Heart left ventricle (tissue), 16 donors: ENCODE measurements at regions of chr22 and their contacts with region 1.

Region 1: GRCh38 chr22:46619830-46620501 is at the start of gene GRAMD4:
- DNase-seq: peak; percentile 64 to 85 (median 76)
- ATAC-seq: peak; percentile 15 to 59 (median 35)
- H3K4me3 ChIP-seq: peak within 1 kb of the TSS in 1 of 12 donors; percentile 37
- H3K27ac ChIP-seq: peak within 1 kb of the TSS; percentile 47 to 92 (median 84)
- H3K4me1 ChIP-seq: peaks cover 15 to 74% (median 58%) of the 10 kb centered on the region in 12 donors
- H3K27me3 ChIP-seq: no peaks in the 10 kb centered on the region
- CTCF ChIP-seq: no peak
- POLR2A ChIP-seq: no peak
- total RNA-seq, gene GRAMD4: 31.2 to 122 (median 72.5) TPM

Region 2: GRCh38 chr22:46584081-46584921 is 35.7 kb before region 1 on chr22:
- intact Hi-C with region 1: loop called in 4 of 10 experiments (anchors 5 kb)
- DNase-seq: peak in 2 of 5 donors; percentile 38 to 60
- ATAC-seq: no peak
- H3K4me3 ChIP-seq: no peak overlapping the region
- H3K27ac ChIP-seq: peak overlapping the region in 5 of 12 donors; percentile 24 to 63 (median 41)
- H3K4me1 ChIP-seq: peaks cover 14 to 90% (median 67%) of the 10 kb centered on the region in 12 donors
- H3K27me3 ChIP-seq: no peaks in the 10 kb centered on the region
- CTCF ChIP-seq: no peak
- POLR2A ChIP-seq: no peak

Region 3: DNA sequence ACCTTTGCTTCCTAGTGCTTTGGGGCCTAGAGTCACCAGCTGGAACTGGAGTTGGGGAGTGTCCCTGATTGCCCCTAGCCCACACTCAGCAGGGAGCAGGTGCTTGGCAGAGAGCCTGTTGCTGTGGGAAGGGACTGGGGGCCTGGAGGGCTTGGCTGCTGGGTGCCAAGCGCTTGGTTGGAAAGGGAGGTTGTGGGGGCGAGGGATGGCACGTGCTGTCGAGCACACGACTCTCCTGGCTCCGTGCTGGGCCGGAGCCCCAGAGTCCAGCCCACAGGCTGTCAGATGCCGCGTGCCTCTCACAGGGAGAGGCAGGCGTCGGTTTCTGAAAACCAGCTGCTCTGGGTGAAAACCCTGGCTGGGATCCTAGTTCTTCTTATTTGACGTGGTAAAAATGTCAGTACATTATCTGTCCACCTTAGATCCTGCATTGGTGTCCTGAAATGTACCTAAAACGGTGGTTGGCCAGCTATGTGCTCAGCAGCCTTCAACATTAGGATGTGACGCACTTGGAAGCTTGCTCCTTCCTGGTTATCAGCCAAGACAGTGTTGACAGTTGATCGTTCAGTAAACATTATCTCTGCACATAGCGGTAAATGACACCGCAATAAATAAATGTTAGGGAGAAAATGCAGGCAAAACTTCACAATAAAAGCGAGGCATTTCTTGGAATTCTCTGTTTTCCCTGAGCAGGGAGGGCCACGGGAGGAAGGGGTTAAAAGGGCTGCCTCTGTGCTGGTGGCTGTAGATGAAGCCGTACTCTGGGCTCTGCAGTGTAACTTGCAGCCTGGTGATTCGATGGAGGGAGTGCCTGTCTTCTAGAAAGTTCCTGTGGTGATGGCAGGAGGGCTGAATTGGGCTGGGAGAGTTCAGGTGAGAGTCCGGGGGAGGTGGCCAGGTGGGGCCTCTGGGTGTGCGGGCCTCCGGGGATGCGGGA is 29.4 kb after region 1 on chr22:
- intact Hi-C with region 1: loop called in 1 of 10 experiments (anchors 5 kb)
- DNase-seq: peak in 4 of 5 donors; percentile 66 to 88 (median 74)
- ATAC-seq: peak; percentile 69 to 79 (median 76)
- H3K4me3 ChIP-seq: no peak overlapping the region
- H3K27ac ChIP-seq: peak overlapping the region; percentile 75 to 98 (median 90)
- H3K4me1 ChIP-seq: peaks cover 24 to 92% (median 72%) of the 10 kb centered on the region in 12 donors
- H3K27me3 ChIP-seq: no peaks in the 10 kb centered on the region
- CTCF ChIP-seq: no peak
- POLR2A ChIP-seq: no peak

Region 4: DNA sequence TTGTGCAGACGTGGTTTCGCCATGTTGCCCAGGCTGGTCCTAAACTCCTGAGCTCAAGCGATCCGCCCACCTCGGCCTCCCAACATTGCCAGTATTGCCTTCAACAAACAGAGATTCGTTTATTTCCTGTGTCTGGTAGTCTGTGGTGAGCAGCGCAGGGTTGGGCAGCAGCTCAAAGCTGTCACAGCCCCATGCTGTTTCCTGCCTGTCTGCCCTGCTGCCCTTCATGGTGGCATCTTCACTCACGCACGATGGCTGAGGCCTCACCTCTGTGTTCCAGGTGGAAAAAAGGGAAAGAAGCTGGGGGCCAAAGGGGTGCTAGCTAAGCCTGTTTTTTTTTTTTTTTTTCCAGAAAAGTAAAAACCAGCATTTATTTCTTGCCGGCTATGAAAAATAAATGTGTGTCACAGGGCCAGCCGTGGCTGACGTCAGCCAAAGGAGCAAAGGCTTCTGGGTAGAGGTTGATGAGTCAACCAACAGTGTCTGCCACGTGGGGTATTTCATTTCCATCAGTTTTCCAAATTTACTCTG is 171.3 kb after region 1 on chr22:
- intact Hi-C with region 1: no loop called
- DNase-seq: peak in 2 of 5 donors; percentile 47 to 58
- ATAC-seq: peak in 3 of 4 donors; percentile 31 to 57 (median 57)
- H3K4me3 ChIP-seq: peak overlapping the region in 1 of 12 donors; percentile 31
- H3K27ac ChIP-seq: peak overlapping the region in 7 of 12 donors; percentile 5 to 89 (median 48)
- H3K4me1 ChIP-seq: peaks cover 0 to 53% (median 29%) of the 10 kb centered on the region in 12 donors
- H3K27me3 ChIP-seq: no peaks in the 10 kb centered on the region
- CTCF ChIP-seq: no peak
- POLR2A ChIP-seq: no peak

Region 5: GRCh38 chr22:46845296-46846149 is 225.6 kb after region 1 on chr22:
- intact Hi-C with region 1: no loop called
- DNase-seq: no peak
- ATAC-seq: peak in 2 of 4 donors; percentile 28 to 58
- H3K4me3 ChIP-seq: peak overlapping the region in 9 of 12 donors; percentile 3 to 52 (median 39)
- H3K27ac ChIP-seq: peak overlapping the region in 4 of 12 donors; percentile 2 to 50 (median 24)
- H3K4me1 ChIP-seq: peaks cover 0 to 19% (median 0%) of the 10 kb centered on the region in 12 donors
- H3K27me3 ChIP-seq: no peaks in the 10 kb centered on the region
- CTCF ChIP-seq: peak; percentile 9 to 66 (median 52)
- POLR2A ChIP-seq: no peak